ENCODE measurements at regions of chr18 and their contacts with region 1.

Region 1: DNA sequence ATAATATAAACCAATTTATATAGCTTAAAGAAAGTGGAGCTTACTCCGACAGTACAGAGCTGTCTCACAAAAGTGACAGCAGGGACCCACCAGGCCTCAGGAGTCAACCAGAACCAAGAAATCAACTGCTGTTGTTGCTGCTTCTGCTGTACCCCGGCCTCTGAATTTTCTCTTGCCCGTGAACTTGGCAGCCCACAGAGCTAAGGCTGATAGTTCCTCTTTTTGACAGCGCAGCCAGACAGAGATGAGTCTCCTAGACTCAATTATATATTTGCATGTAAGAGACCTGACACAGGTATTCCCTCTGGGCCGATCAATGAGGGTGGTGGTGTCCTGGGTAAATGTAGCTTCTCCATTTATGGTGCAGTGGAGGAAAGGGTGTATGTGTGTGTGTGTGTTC is 109.4 kb downstream of the KCTD1 start:
- DNase-seq: no peak
- H3K4me3 Mint-ChIP-seq: no peak overlapping the region
- H3K27ac Mint-ChIP-seq: no peak overlapping the region
- H3K4me1 Mint-ChIP-seq: peaks cover 48% of the 10 kb centered on the region
- H3K27me3 Mint-ChIP-seq: no peaks in the 10 kb centered on the region
- CTCF ChIP-seq: no peak

Region 2: GRCh38 chr18:26309281-26309680 is 129.7 kb before region 1 on chr18:
- CTCF ChIA-PET with region 1: no interaction called
- POLR2A ChIA-PET with region 1: no interaction called
- intact Hi-C with region 1: no loop called
- DNase-seq: peak; percentile 53
- H3K4me3 Mint-ChIP-seq: no peak overlapping the region
- H3K27ac Mint-ChIP-seq: no peak overlapping the region
- H3K4me1 Mint-ChIP-seq: no peaks in the 10 kb centered on the region
- H3K27me3 Mint-ChIP-seq: no peaks in the 10 kb centered on the region
- CTCF ChIP-seq: no peak

Region 3: GRCh38 chr18:26322890-26323653 is 115.9 kb before region 1 on chr18:
- CTCF ChIA-PET with region 1: no interaction called
- POLR2A ChIA-PET with region 1: no interaction called
- intact Hi-C with region 1: no loop called
- DNase-seq: peak; percentile 36
- H3K4me3 Mint-ChIP-seq: no peak overlapping the region
- H3K27ac Mint-ChIP-seq: peak overlapping the region; percentile 3
- H3K4me1 Mint-ChIP-seq: peaks cover 15% of the 10 kb centered on the region
- H3K27me3 Mint-ChIP-seq: no peaks in the 10 kb centered on the region
- CTCF ChIP-seq: no peak

Region 4: DNA sequence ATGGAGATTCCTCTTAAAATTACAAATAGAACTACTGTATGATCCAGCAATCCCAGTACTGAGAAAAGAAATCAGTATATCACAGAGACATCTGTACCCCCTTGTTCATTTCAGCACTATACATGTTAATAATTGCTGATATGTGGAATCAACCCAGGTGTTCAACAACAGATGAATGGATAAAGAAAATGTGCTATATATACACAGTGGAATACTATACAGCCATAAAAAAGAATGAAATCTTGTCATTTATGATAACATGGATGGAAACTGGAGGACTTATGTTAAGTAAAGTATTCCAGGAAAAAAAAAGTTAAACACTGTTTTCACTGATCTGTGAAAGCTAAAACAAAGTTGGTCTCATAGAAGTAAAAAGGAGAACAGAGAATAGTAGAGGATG is 88.0 kb before region 1 on chr18:
- CTCF ChIA-PET with region 1: no interaction called
- POLR2A ChIA-PET with region 1: no interaction called
- intact Hi-C with region 1: no loop called
- DNase-seq: no peak
- H3K4me3 Mint-ChIP-seq: no peak overlapping the region
- H3K27ac Mint-ChIP-seq: no peak overlapping the region
- H3K4me1 Mint-ChIP-seq: no peaks in the 10 kb centered on the region
- H3K27me3 Mint-ChIP-seq: no peaks in the 10 kb centered on the region
- CTCF ChIP-seq: no peak

Region 5: GRCh38 chr18:26405190-26405801 is 33.7 kb before region 1 on chr18:
- CTCF ChIA-PET with region 1: interaction called, 7 read pairs
- POLR2A ChIA-PET with region 1: interaction called, 25 read pairs
- intact Hi-C with region 1: no loop called
- DNase-seq: peak; percentile 64
- H3K4me3 Mint-ChIP-seq: no peak overlapping the region
- H3K27ac Mint-ChIP-seq: no peak overlapping the region
- H3K4me1 Mint-ChIP-seq: peaks cover 11% of the 10 kb centered on the region
- H3K27me3 Mint-ChIP-seq: no peaks in the 10 kb centered on the region
- CTCF ChIP-seq: peak; percentile 57

Region 6: DNA sequence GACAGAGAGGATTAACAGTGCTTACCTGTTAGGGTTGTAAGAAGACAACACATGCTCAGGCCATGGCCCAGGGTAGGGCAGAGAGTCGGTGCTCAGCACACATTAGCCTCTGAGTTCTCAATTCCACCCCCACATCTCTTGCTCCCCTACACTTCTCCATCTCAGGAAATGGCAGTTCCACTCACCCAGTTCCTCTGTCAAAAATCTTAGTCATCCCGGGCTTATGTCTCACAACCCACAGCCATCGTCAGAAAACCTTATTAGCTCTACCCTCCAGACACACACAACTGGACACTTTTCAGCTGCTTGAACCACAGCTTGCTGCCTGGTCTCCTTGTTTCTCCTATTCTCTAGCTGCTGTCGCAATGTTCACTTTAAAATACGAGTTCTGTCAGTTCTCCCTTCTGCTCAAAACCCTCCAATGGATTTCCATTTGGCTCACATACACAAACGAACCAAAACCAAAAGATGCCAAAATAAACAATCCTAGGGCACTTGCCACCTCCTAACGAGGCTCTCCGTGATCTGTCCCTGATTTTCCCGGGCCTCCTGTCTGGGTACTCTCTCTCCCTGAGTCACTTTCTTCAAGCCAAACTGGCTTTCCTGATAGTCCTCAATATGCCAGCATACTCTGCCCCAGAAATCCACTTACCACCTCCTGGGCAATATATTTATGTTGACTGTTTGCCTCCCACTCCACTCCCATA is 19.7 kb after region 1 on chr18:
- CTCF ChIA-PET with region 1: interaction called, 6 read pairs
- POLR2A ChIA-PET with region 1: interaction called, 40 read pairs
- intact Hi-C with region 1: no loop called
- DNase-seq: peak; percentile 80
- H3K4me3 Mint-ChIP-seq: peak overlapping the region; percentile 55
- H3K27ac Mint-ChIP-seq: peak overlapping the region; percentile 89
- H3K4me1 Mint-ChIP-seq: peaks cover 41% of the 10 kb centered on the region
- H3K27me3 Mint-ChIP-seq: no peaks in the 10 kb centered on the region
- CTCF ChIP-seq: no peak

Region 7: GRCh38 chr18:26480897-26481895 is 42.2 kb after region 1 on chr18:
- CTCF ChIA-PET with region 1: interaction called, 3 read pairs
- POLR2A ChIA-PET with region 1: interaction called, 41 read pairs
- intact Hi-C with region 1: no loop called
- DNase-seq: peak; percentile 88
- H3K4me3 Mint-ChIP-seq: peak overlapping the region; percentile 41
- H3K27ac Mint-ChIP-seq: peak overlapping the region; percentile 88
- H3K4me1 Mint-ChIP-seq: peaks cover 46% of the 10 kb centered on the region
- H3K27me3 Mint-ChIP-seq: no peaks in the 10 kb centered on the region
- CTCF ChIP-seq: no peak

Region 8: GRCh38 chr18:26487437-26487836 is 48.5 kb after region 1 on chr18:
- CTCF ChIA-PET with region 1: interaction called, 7 read pairs
- POLR2A ChIA-PET with region 1: interaction called, 41 read pairs
- intact Hi-C with region 1: no loop called
- DNase-seq: peak; percentile 92
- H3K4me3 Mint-ChIP-seq: no peak overlapping the region
- H3K27ac Mint-ChIP-seq: peak overlapping the region; percentile 83
- H3K4me1 Mint-ChIP-seq: peaks cover 34% of the 10 kb centered on the region
- H3K27me3 Mint-ChIP-seq: no peaks in the 10 kb centered on the region
- CTCF ChIP-seq: no peak

Region 9: DNA sequence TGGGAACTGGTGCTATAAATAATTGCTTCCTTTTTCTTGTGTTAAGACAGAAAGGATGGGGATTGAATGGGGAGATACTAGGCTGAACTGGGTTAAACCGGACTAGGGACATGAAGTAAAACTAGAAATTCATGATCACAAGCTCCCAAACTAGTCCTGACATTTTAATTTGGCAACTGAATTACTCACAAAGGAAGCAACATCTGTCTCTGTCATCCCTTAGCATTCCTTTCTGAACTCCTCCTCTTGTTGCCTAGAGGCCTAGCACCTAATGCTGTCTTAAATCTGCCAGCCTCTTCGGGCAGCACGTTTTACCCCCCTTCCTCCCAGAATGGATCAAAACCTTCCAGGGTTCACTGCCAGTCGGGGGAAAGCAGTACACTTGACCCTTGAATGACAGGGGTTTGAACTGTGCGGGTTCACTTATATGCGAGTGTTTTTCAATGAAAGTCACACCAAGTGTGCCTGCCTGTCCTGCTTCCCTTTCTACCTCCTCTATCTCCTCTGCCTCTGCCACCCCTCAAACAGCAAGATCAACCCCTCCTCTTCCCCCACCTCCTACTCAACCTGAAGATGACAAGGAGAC is 101.2 kb after region 1 on chr18:
- CTCF ChIA-PET with region 1: interaction called, 3 read pairs
- POLR2A ChIA-PET with region 1: interaction called, 27 read pairs
- intact Hi-C with region 1: loop called (anchors 5 kb)
- DNase-seq: peak; percentile 81
- H3K4me3 Mint-ChIP-seq: peak overlapping the region; percentile 40
- H3K27ac Mint-ChIP-seq: peak overlapping the region; percentile 81
- H3K4me1 Mint-ChIP-seq: peaks cover 53% of the 10 kb centered on the region
- H3K27me3 Mint-ChIP-seq: no peaks in the 10 kb centered on the region
- CTCF ChIP-seq: no peak

Measured in MCF 10A (cell line).